ENCODE measurements at regions of chr1 and their contacts with region 1.

Region 1: GRCh38 chr1:28965271-28965870 is 51.0 kb downstream of the EPB41 start:
- DNase-seq: no peak
- H3K4me3 Mint-ChIP-seq: no peak overlapping the region
- H3K27ac Mint-ChIP-seq: no peak overlapping the region
- H3K4me1 Mint-ChIP-seq: peaks cover 54% of the 10 kb centered on the region
- H3K27me3 Mint-ChIP-seq: no peaks in the 10 kb centered on the region

Region 2: GRCh38 chr1:28914228-28915030 is 50.9 kb before region 1 on chr1 and contains the start of gene EPB41:
- CTCF ChIA-PET with region 1: interaction called, 4 read pairs
- POLR2A ChIA-PET with region 1: interaction called, 8 read pairs
- intact Hi-C with region 1: loop called (anchors 1 kb)
- DNase-seq: peak; percentile 93
- H3K4me3 Mint-ChIP-seq: peak within 1 kb of the TSS; percentile 98
- H3K27ac Mint-ChIP-seq: peak within 1 kb of the TSS; percentile 93
- H3K4me1 Mint-ChIP-seq: peaks cover 50% of the 10 kb centered on the region
- H3K27me3 Mint-ChIP-seq: no peaks in the 10 kb centered on the region
- total RNA-seq, gene EPB41: 67.6 to 71.0 TPM

Region 3: GRCh38 chr1:28933277-28933676 is 32.1 kb before region 1 on chr1:
- CTCF ChIA-PET with region 1: no interaction called
- POLR2A ChIA-PET with region 1: no interaction called
- intact Hi-C with region 1: loop called (anchors 2 kb)
- DNase-seq: no peak
- H3K4me3 Mint-ChIP-seq: peak overlapping the region; percentile 3
- H3K27ac Mint-ChIP-seq: peak overlapping the region; percentile 1
- H3K4me1 Mint-ChIP-seq: peaks cover 72% of the 10 kb centered on the region
- H3K27me3 Mint-ChIP-seq: no peaks in the 10 kb centered on the region

Region 4: GRCh38 chr1:28950449-28950848 is 14.9 kb before region 1 on chr1:
- CTCF ChIA-PET with region 1: no interaction called
- POLR2A ChIA-PET with region 1: no interaction called
- intact Hi-C with region 1: no loop called
- DNase-seq: no peak
- H3K4me3 Mint-ChIP-seq: no peak overlapping the region
- H3K27ac Mint-ChIP-seq: no peak overlapping the region
- H3K4me1 Mint-ChIP-seq: peaks cover 39% of the 10 kb centered on the region
- H3K27me3 Mint-ChIP-seq: no peaks in the 10 kb centered on the region

Region 5: DNA sequence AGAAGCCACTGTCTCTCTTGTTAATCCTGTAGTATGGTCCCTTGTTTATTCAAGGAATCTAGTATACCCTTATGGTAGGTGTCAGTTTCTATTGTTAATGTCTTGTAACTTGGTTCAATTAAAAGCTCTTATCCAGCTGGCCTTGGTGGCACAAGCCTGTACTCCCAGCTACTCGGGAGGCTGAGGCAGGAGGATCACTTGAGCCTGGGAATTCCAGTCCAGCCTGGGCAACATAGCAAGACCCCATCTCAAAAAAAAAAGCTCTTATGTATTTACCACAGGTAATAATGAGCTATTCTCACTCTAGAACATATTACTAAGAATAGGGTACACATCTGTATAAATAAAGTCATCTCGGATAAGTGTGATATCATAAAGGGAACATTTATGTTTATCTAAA is 111.8 kb after region 1 on chr1:
- CTCF ChIA-PET with region 1: no interaction called
- POLR2A ChIA-PET with region 1: no interaction called
- intact Hi-C with region 1: no loop called
- DNase-seq: no peak
- H3K4me3 Mint-ChIP-seq: no peak overlapping the region
- H3K27ac Mint-ChIP-seq: no peak overlapping the region
- H3K4me1 Mint-ChIP-seq: peaks cover 8% of the 10 kb centered on the region
- H3K27me3 Mint-ChIP-seq: no peaks in the 10 kb centered on the region

Region 6: GRCh38 chr1:29711582-29712283 is 746.4 kb after region 1 on chr1:
- CTCF ChIA-PET with region 1: no interaction called
- POLR2A ChIA-PET with region 1: no interaction called
- intact Hi-C with region 1: loop called (anchors 10 kb)
- DNase-seq: peak; percentile 79
- H3K4me3 Mint-ChIP-seq: no peak overlapping the region
- H3K27ac Mint-ChIP-seq: peak overlapping the region; percentile 34
- H3K4me1 Mint-ChIP-seq: peaks cover 30% of the 10 kb centered on the region
- H3K27me3 Mint-ChIP-seq: peaks cover 19% of the 10 kb centered on the region